SK-N-SH (cell line): ENCODE measurements at regions of chr13 and their contacts with region 1.

Region 1: GRCh38 chr13:76903544-76904162 is 17.4 kb upstream of the KCTD12 start:
- DNase-seq: peak; percentile 73
- H3K4me3 ChIP-seq: no peak overlapping the region
- H3K27ac ChIP-seq: no peak overlapping the region
- H3K4me1 ChIP-seq: no peaks in the 10 kb centered on the region; a peak in 2 of 4 replicates
- H3K27me3 ChIP-seq: peaks cover 5% of the 10 kb centered on the region; the same call in 1 of the 2 replicates
- CTCF ChIP-seq: peak; percentile 99
- EP300 ChIP-seq: no peak
- RAD21 ChIP-seq: peak; percentile 99

Region 2: GRCh38 chr13:75687150-75687763 is 1216.4 kb before region 1 on chr13:
- CTCF ChIA-PET with region 1: interaction called, 12 read pairs
- POLR2A ChIA-PET with region 1: no interaction called
- DNase-seq: peak; percentile 10
- H3K4me3 ChIP-seq: no peak overlapping the region
- H3K27ac ChIP-seq: peak overlapping the region in 1 of 2 experiments; percentile 0; a peak in 1 of 4 replicates
- H3K4me1 ChIP-seq: peaks cover 0 to 13% of the 10 kb centered on the region in 2 experiments; a peak in 1 of 4 replicates
- H3K27me3 ChIP-seq: no peaks in the 10 kb centered on the region
- CTCF ChIP-seq: peak; percentile 72
- EP300 ChIP-seq: no peak
- RAD21 ChIP-seq: peak; percentile 65

Region 3: GRCh38 chr13:75870397-75870903 is 1033.2 kb before region 1 on chr13:
- CTCF ChIA-PET with region 1: interaction called, 26 read pairs
- POLR2A ChIA-PET with region 1: no interaction called
- DNase-seq: peak; percentile 46
- H3K4me3 ChIP-seq: peak overlapping the region; percentile 38 to 48
- H3K27ac ChIP-seq: no peak overlapping the region
- H3K4me1 ChIP-seq: 0 out of 4 replicates have a peak, but pooled peaks cover 0 to 3% of the 10 kb centered on the region in 2 experiments
- H3K27me3 ChIP-seq: no peaks in the 10 kb centered on the region
- CTCF ChIP-seq: peak; percentile 85
- EP300 ChIP-seq: no peak
- RAD21 ChIP-seq: peak; percentile 73

Region 4: DNA sequence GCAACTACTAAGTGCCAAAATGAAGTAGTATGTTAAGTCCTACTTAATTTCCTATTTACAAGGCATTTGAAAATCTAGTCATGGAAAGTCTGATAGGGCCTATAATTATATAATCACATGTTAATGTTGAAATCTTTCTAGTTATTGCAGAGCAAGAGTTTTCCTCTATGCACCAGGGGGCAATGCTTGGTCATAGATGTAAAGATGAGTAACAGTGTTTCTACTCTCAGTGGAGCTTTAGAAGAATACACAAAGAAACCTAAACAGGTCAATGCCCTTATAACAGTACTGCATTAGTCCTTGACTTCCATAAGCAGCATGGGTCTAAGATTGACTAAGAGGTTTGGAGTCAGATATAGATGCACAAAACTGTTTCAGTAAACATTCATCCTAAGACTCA is 236.1 kb before region 1 on chr13:
- CTCF ChIA-PET with region 1: interaction called, 20 read pairs
- POLR2A ChIA-PET with region 1: no interaction called
- DNase-seq: peak; percentile 4
- H3K4me3 ChIP-seq: no peak overlapping the region
- H3K27ac ChIP-seq: no peak overlapping the region
- H3K4me1 ChIP-seq: no peaks in the 10 kb centered on the region
- H3K27me3 ChIP-seq: no peaks in the 10 kb centered on the region
- CTCF ChIP-seq: peak; percentile 73
- EP300 ChIP-seq: no peak
- RAD21 ChIP-seq: peak; percentile 73

Region 5: GRCh38 chr13:76886292-76887075 is 17.2 kb before region 1 on chr13 and contains the start of gene KCTD12:
- CTCF ChIA-PET with region 1: interaction called, 49 read pairs
- POLR2A ChIA-PET with region 1: no interaction called
- DNase-seq: peak; percentile 86
- H3K4me3 ChIP-seq: peak within 1 kb of the TSS; percentile 67 to 70
- H3K27ac ChIP-seq: peak within 1 kb of the TSS; percentile 36 to 58; a peak in 3 of 4 replicates
- H3K4me1 ChIP-seq: peaks cover 0 to 13% of the 10 kb centered on the region in 2 experiments; a peak in 2 of 4 replicates
- H3K27me3 ChIP-seq: no peaks in the 10 kb centered on the region
- CTCF ChIP-seq: 0 out of 2 replicates have a peak, but pooled peaks have one; percentile 14
- EP300 ChIP-seq: no peak
- RAD21 ChIP-seq: peak; percentile 33; the same call in 1 of the 2 replicates
- polyA plus RNA-seq, gene KCTD12: 0.93 and 1.0 TPM in 2 replicates

Region 6: DNA sequence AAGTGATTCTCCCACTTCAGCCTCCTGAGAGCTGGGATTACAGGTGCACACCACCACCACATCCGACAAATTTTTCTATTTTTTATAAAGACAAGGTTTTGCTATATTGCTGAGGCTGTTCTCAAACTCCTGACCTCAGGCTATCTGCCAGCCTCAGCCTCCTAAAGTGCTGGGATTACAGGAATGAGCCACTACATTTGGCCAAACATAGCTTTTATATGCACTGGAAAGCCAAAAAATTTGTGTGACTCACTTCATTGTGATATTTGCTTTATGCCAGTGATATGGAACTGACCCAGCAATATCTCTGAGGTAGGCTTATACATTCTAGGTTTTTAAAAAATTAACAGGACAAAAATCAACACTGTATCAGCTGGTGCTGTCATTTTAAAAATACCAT is 17.9 kb after region 1 on chr13:
- CTCF ChIA-PET with region 1: interaction called, 11 read pairs
- POLR2A ChIA-PET with region 1: no interaction called
- DNase-seq: no peak
- H3K4me3 ChIP-seq: no peak overlapping the region
- H3K27ac ChIP-seq: no peak overlapping the region
- H3K4me1 ChIP-seq: no peaks in the 10 kb centered on the region; a peak in 1 of 4 replicates
- H3K27me3 ChIP-seq: no peaks in the 10 kb centered on the region
- CTCF ChIP-seq: no peak
- EP300 ChIP-seq: no peak
- RAD21 ChIP-seq: no peak

Region 7: GRCh38 chr13:76980075-76980718 is 76.5 kb after region 1 on chr13:
- CTCF ChIA-PET with region 1: interaction called, 13 read pairs
- POLR2A ChIA-PET with region 1: no interaction called
- DNase-seq: peak; percentile 92
- H3K4me3 ChIP-seq: peak overlapping the region; percentile 38 to 53; a peak in 3 of 4 replicates
- H3K27ac ChIP-seq: no peak overlapping the region
- H3K4me1 ChIP-seq: peaks cover 0 to 5% of the 10 kb centered on the region in 2 experiments; a peak in 2 of 4 replicates
- H3K27me3 ChIP-seq: no peaks in the 10 kb centered on the region
- CTCF ChIP-seq: peak; percentile 93
- EP300 ChIP-seq: no peak
- RAD21 ChIP-seq: peak; percentile 69